ENCODE measurements at regions of chr17 and their contacts with region 1.

Region 1: GRCh38 chr17:28552246-28552999 is at the start of gene UNC119:
- DNase-seq: peak; percentile 91
- ATAC-seq: peak; percentile 71
- H3K4me3 Mint-ChIP-seq: peak within 1 kb of the TSS; percentile 87
- H3K27ac Mint-ChIP-seq: peak within 1 kb of the TSS; percentile 70
- H3K4me1 Mint-ChIP-seq: peaks cover 52% of the 10 kb centered on the region
- H3K27me3 Mint-ChIP-seq: no peaks in the 10 kb centered on the region
- total RNA-seq, gene UNC119: 35.9 to 48.7 TPM

Region 2: DNA sequence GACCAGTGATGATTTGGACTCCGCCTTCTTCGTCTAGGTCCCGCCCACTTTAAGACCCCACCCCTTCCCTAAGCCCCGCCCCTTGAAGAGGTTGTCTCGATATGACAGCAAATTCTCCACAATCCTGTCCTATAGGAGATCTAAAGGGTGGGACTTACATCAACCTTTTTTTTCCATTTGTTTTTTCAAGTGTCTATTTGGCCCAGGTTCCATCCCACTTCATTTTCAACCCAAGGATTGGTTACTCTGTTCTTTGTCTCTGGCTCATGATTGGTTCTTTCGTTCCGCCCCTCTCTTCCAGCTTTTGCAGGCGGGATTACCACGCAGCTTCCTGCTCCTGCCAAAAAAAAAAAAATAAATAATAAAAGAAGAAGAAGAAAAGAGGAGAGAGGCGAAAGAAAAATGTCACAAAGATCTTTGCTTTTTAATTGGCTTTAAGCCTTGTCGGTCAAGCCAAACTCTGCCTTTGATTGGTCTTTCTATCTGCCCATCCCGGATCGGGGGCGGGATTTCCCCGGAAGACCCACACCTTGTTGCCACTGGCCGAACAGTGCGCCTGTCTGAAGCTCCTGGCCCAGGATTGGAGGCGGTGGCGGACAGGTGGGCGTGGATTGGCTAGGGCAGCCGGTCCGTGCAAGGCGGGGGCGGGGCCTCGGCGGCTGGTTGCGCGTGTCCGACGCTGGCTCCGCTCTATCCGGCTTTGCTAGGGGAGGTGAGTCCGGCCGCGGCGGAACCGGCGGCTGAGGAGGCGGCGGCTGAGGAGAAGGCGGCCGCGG is 511.2 kb before region 1 on chr17:
- CTCF ChIA-PET with region 1: no interaction called
- POLR2A ChIA-PET with region 1: no interaction called
- intact Hi-C with region 1: loop called in 1 of 2 experiments (anchors 1 kb)
- DNase-seq: peak; percentile 100
- ATAC-seq: peak; percentile 96
- H3K4me3 Mint-ChIP-seq: peak overlapping the region; percentile 79
- H3K27ac Mint-ChIP-seq: peak overlapping the region; percentile 74
- H3K4me1 Mint-ChIP-seq: peaks cover 52% of the 10 kb centered on the region
- H3K27me3 Mint-ChIP-seq: no peaks in the 10 kb centered on the region

Region 3: DNA sequence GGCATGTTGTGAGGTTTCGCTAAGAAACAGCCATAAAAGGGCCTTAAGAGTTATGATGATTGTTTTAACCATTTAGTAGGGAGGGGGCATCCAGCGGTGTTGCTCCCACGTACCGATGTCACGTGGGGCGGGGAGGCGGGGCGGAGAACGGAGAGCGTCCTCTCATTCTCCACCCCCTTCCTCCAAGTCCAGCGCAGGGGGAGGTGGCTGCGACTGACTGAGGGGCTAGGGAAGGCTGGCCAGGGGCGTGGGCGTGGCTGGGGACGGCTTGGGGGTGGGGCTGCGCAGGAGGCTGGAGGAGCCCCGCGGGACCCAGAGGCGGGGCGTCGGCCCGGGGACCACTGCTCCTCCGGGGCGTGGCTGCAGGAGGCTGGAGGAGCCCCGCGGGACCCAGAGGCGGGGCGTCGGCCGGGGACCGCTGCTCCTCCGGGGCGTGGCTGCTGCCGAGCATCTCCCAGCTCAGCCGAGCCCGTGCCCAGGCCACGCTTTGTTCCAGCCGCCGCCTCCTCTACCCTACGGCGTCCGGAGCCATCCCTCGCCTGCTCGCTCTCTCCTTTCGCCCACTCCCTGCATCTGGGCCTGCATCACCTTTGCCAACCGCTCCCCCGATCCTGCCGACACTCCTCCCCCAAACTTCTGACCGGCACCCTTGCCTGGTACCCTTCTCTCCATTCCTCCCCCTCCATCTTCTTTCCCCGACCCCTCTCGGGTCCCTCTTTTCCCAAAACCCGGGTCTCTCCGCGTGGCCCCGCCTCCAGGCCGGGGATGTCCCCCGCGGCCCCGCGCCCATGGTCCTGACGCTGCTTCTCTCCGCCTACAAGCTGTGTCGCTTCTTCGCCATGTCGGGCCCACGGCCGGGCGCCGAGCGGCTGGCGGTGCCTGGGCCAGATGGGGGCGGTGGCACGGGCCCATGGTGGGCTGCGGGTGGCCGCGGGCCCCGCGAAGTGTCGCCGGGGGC is 180.9 kb before region 1 on chr17 and contains the start of gene SARM1:
- CTCF ChIA-PET with region 1: no interaction called
- POLR2A ChIA-PET with region 1: no interaction called
- intact Hi-C with region 1: loop called in 1 of 2 experiments (anchors 1 kb)
- DNase-seq: peak; percentile 95
- ATAC-seq: peak; percentile 95
- H3K4me3 Mint-ChIP-seq: peak within 1 kb of the TSS; percentile 76
- H3K27ac Mint-ChIP-seq: peak within 1 kb of the TSS; percentile 86
- H3K4me1 Mint-ChIP-seq: peaks cover 22% of the 10 kb centered on the region
- H3K27me3 Mint-ChIP-seq: no peaks in the 10 kb centered on the region
- total RNA-seq, gene SARM1: 18.1 to 21.9 TPM

Region 4: DNA sequence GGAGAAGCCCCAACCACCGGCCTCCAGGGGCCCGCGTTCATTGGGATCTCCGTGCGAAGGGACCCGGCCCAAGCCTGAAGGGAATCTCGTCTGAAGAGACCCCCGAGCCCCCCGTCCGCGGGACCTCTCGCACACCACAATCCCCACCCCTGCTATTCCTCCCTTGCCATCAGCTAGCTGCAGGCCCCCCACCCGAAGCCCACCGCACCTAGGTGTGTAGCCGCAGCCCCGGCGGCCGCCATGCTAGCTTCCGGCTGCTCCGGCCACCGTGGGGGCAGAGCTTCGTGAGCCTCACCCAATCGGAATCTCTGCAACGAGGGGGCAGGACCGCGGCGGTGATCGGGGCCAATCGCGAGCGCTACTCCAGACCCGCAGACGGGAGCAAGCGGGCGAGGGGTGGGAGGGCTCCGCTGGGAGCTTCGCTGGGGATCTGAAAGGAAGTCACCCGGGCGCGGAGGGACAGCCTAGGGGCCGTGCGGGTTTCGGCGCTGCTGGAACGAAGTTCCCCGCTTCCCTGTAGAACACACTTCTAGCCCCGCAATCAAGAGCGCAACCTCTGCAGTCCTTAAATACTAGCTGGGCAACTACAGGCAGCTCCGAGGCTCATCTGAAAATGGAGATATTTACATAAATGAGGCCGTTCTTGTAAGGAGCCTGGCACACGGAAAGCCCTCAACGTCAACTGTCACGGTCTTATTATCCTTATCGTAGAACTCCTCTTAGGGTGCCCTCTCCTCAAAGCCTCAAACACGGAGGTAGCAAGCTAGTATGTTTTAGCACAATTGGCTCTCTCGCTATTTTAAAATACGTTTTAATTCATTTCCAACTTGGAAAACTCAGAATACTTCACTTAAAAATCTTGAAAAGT is 19.1 kb after region 1 on chr17 and contains the start of gene PIGS:
- CTCF ChIA-PET with region 1: interaction called, 38 read pairs
- POLR2A ChIA-PET with region 1: interaction called, 5 read pairs
- intact Hi-C with region 1: loop called (anchors 1 to 2 kb)
- DNase-seq: peak; percentile 96
- ATAC-seq: peak; percentile 99
- H3K4me3 Mint-ChIP-seq: peak within 1 kb of the TSS; percentile 95
- H3K27ac Mint-ChIP-seq: peak within 1 kb of the TSS; percentile 94
- H3K4me1 Mint-ChIP-seq: peaks cover 51% of the 10 kb centered on the region
- H3K27me3 Mint-ChIP-seq: no peaks in the 10 kb centered on the region
- total RNA-seq, gene PIGS: 38.7 to 41.4 TPM

Region 5: DNA sequence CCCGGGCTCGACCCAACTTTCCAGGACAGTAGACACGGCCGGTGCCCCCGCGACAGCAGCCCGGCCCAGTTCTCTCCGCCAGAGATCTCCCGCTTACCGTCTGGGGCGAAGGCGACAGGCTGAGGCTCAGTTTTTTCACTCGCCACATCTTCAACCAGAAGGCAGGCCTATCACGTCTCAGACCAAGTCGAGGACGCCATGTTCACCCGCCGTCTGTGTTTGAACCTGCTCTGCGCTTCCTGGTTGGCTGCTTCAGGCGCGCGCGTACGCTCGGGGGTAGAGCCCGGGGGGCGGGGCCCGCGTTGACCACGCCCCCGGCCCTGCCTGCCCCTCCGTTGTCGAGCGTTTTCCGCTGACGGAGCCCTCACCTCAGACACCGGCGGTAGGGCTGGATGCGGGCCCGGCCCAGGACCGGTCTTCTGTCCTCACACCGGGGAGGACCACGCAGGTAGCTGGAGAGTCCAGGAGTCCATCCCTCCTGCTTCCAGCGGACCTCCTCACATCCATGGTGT is 46.4 kb after region 1 on chr17 and contains the start of gene SPAG5:
- CTCF ChIA-PET with region 1: interaction called, 5 read pairs
- POLR2A ChIA-PET with region 1: no interaction called
- intact Hi-C with region 1: loop called (anchors 1 to 2 kb)
- DNase-seq: peak; percentile 97
- ATAC-seq: peak; percentile 92
- H3K4me3 Mint-ChIP-seq: peak within 1 kb of the TSS; percentile 89
- H3K27ac Mint-ChIP-seq: peak within 1 kb of the TSS; percentile 98
- H3K4me1 Mint-ChIP-seq: peaks cover 21% of the 10 kb centered on the region
- H3K27me3 Mint-ChIP-seq: no peaks in the 10 kb centered on the region
- total RNA-seq, gene SPAG5: 142 to 165 TPM

Region 6: DNA sequence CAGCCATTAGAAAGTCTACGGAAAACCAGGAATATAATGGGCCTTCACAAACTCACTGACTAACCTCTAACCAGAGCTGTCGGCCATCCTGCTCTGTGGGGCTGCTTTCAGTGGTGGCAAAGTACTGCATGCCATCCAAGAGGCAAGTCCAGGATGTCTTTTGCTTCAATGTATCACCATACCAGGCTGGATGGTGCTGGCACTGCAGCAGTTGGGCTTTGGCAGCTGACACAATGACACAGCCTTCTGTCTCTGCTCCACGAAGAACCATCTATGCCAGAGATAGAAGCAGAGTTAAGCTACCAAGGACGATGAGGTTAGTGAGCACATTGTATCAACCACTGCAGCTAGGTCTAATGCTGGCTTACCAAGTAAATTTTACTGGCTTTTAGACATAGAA is 71.3 kb after region 1 on chr17:
- CTCF ChIA-PET with region 1: no interaction called
- POLR2A ChIA-PET with region 1: no interaction called
- intact Hi-C with region 1: no loop called
- DNase-seq: no peak
- ATAC-seq: no peak
- H3K4me3 Mint-ChIP-seq: no peak overlapping the region
- H3K27ac Mint-ChIP-seq: no peak overlapping the region
- H3K4me1 Mint-ChIP-seq: peaks cover 9% of the 10 kb centered on the region
- H3K27me3 Mint-ChIP-seq: no peaks in the 10 kb centered on the region

Region 7: GRCh38 chr17:28710861-28711722 is 158.7 kb after region 1 on chr17:
- CTCF ChIA-PET with region 1: no interaction called
- POLR2A ChIA-PET with region 1: no interaction called
- intact Hi-C with region 1: loop called in 1 of 2 experiments (anchors 1 kb)
- DNase-seq: peak; percentile 94
- ATAC-seq: peak; percentile 90
- H3K4me3 Mint-ChIP-seq: peak overlapping the region; percentile 80
- H3K27ac Mint-ChIP-seq: peak overlapping the region; percentile 91
- H3K4me1 Mint-ChIP-seq: peaks cover 19% of the 10 kb centered on the region
- H3K27me3 Mint-ChIP-seq: peaks cover 17% of the 10 kb centered on the region